ENCODE measurements at regions of chr19 and their contacts with region 1.

Region 1: GRCh38 chr19:52397310-52398080 is at the start of gene ZNF528:
- DNase-seq: peak; percentile 92
- H3K4me3 ChIP-seq: peak within 1 kb of the TSS; percentile 14 to 73 (median 49)
- H3K27ac ChIP-seq: peak within 1 kb of the TSS; percentile 42
- H3K4me1 ChIP-seq: no peaks in the 10 kb centered on the region
- H3K27me3 ChIP-seq: no peaks in the 10 kb centered on the region
- CTCF ChIP-seq: no peak
- POLR2A ChIP-seq: peak; percentile 84
- total RNA-seq, gene ZNF528: 11.3 and 16.1 TPM in 2 replicates

Region 2: DNA sequence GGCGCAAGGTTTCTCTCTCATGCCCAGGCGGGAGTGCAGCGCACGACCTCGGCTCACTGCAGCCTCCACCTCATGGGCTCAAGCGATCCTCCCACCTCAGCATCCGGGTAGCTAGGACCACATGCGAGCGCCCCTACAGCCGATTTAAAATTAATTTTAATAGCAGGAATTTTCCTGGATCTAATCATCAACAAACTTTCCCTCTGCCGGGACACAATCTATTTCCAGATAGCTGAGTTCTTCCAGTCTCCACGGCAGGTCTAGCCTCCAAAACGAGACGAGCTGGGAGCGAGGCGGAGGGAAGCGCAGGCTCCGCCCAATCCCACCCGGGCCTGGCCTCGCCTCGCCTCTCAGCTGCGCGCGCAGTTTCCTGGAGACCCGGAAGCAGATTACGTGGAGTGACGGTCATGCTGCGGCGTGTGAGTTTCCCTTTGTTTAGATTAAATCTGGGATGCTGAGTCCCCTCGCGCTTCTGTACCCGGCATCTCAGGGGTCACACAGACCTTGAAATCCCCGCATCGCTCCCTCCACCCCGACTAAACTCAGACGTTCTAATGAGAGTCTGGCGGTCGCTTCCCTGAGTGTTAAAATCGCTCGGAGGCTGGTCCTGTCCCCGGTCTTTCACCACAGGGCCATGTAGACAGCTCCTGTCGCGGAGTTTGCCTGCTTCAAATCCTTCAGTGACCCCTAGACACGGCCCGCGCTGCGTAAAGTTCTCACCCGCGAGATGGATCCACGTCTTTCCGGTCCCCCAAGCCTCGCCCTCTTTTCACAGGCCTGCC is 27.7 kb before region 1 on chr19 and contains the start of gene ZNF880:
- CTCF ChIA-PET with region 1: interaction called, 3 read pairs
- POLR2A ChIA-PET with region 1: no interaction called
- dilution Hi-C with region 1: no loop called
- intact Hi-C with region 1: loop called (anchors 1 kb)
- DNase-seq: peak; percentile 89
- H3K4me3 ChIP-seq: peak within 1 kb of the TSS; percentile 61 to 80 (median 75)
- H3K27ac ChIP-seq: peak within 1 kb of the TSS; percentile 97
- H3K4me1 ChIP-seq: peaks cover 8% of the 10 kb centered on the region
- H3K27me3 ChIP-seq: no peaks in the 10 kb centered on the region
- CTCF ChIP-seq: no peak
- POLR2A ChIP-seq: peak; percentile 72
- total RNA-seq, gene ZNF880: 7.9 and 11.0 TPM in 2 replicates

Region 3: GRCh38 chr19:52415411-52416110 is 18.1 kb after region 1 on chr19:
- CTCF ChIA-PET with region 1: no interaction called
- POLR2A ChIA-PET with region 1: no interaction called
- dilution Hi-C with region 1: no loop called
- intact Hi-C with region 1: no loop called
- DNase-seq: no peak
- H3K4me3 ChIP-seq: no peak overlapping the region
- H3K27ac ChIP-seq: no peak overlapping the region
- H3K4me1 ChIP-seq: no peaks in the 10 kb centered on the region
- H3K27me3 ChIP-seq: no peaks in the 10 kb centered on the region
- CTCF ChIP-seq: no peak
- POLR2A ChIP-seq: no peak